ENCODE measurements at regions of chr1 and their contacts with region 1.

Region 1: DNA sequence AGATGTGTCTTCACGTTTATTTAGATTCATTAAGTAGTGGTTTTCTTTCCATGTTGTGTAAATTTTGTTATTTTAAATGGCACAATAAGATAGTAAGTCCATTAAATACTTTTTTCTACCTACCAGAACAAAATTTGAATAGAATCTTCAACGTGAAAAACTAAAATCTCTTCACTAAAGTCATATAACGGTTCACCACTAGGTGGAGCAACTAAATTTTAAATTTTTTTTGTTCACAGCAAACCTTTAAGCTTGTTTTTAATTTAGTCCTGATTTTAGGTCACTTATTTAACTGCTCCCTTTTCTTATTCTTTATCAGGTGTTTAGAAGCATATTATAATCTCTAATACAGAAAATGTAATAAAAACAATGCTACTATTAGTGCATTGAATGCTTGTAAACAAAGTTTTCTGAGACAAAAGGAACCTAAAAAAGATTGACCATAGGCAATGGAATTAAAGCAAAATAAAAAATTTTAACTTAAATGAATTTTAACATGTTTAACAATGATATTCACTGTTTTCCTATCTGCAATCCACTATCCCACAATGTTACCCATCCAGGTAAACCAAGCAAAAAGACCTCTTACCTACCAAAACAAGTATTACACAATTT is 28.3 kb upstream of the PKN2 start:
- DNase-seq: peak; percentile 46
- H3K4me3 ChIP-seq: no peak overlapping the region
- H3K27ac ChIP-seq: no peak overlapping the region
- H3K4me1 ChIP-seq: no peaks in the 10 kb centered on the region
- H3K27me3 ChIP-seq: no peaks in the 10 kb centered on the region

Region 2: DNA sequence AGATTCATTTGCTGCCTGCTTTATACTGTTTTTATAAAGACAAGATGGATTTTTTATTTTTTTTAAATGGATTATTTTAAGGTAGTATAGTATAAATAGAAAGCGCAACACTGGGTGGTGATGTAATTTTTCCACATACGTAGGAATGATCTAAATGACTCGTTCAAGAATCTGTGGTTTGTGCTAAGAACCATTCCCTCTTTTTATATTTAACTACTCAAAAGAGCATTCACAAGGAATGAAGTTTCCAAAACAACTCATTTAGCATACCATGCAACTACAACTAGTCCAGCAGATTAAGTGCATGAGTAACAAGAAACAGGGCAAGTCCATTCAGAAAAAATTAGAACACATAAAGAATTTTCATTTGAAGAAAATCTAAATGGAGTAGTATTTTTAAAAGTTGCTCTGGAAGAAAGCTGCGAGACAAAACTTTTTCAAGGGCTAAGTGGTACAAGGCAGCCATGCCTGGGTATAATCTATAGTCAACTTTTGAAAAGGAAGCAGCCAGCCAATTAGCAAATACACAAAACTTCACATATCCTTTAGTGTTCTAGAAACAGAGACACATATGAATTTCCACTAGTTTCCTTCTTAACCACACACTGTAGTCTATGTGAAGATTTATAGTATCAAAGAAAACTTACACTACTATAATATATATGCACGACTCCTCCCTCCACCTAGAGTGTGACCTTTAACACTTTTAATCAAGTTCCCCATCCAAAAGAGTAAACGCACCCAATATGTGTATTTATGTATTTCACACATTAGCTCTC is 212.1 kb after region 1 on chr1:
- in situ Hi-C with region 1: loop called (anchors 25 kb)
- DNase-seq: peak; percentile 81
- H3K4me3 ChIP-seq: no peak overlapping the region
- H3K27ac ChIP-seq: peak overlapping the region; percentile 73
- H3K4me1 ChIP-seq: peaks cover 10% of the 10 kb centered on the region; the same call in 1 of the 2 replicates
- H3K27me3 ChIP-seq: no peaks in the 10 kb centered on the region